ENCODE measurements at regions of chr16 and their contacts with region 1.

Region 1: GRCh38 chr16:85114909-85115567 is 2.8 kb upstream of the CIBAR2 start:
- DNase-seq: peak; percentile 82
- H3K4me3 Mint-ChIP-seq: peak overlapping the region; percentile 62
- H3K27ac Mint-ChIP-seq: peak overlapping the region; percentile 83
- H3K4me1 Mint-ChIP-seq: peaks cover 8% of the 10 kb centered on the region
- H3K27me3 Mint-ChIP-seq: no peaks in the 10 kb centered on the region

Region 2: DNA sequence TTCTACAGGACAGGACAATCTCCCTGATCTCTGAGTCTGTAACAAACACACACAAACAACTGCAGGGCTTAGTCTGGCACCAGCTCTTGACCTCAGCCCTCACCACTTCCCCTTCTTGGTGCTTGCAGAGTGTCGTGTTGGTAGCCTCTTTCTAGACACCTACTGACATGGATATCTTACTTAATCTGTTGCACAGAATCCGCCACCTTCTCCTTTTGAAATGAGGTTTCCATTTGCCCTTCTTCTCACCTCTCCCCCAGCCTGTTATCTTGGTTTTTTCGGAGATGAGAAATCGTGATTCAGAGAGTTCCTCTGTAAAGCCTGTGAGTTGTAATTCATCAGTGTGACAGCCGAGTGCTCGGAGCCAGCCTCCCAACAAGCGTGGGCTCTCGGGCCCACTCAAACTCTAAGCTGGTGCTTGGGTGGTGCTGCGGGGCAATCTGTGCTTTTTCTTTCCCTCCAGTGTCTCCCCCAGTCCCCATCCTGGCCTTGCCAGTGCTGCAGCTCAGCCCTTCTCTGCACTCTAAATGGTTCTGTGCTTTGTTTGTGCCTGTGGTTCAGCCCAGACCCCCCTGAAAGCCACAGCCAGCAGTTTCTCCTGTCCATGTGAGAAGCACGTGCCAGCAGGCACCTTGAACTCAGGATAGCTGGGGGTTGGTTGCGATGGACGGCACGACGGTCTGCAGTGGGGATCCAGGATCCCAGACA is 59.4 kb before region 1 on chr16:
- CTCF ChIA-PET with region 1: no interaction called
- POLR2A ChIA-PET with region 1: no interaction called
- DNase-seq: peak; percentile 94
- H3K4me3 Mint-ChIP-seq: peak overlapping the region; percentile 72
- H3K27ac Mint-ChIP-seq: peak overlapping the region; percentile 99
- H3K4me1 Mint-ChIP-seq: peaks cover 56% of the 10 kb centered on the region
- H3K27me3 Mint-ChIP-seq: no peaks in the 10 kb centered on the region

Region 3: DNA sequence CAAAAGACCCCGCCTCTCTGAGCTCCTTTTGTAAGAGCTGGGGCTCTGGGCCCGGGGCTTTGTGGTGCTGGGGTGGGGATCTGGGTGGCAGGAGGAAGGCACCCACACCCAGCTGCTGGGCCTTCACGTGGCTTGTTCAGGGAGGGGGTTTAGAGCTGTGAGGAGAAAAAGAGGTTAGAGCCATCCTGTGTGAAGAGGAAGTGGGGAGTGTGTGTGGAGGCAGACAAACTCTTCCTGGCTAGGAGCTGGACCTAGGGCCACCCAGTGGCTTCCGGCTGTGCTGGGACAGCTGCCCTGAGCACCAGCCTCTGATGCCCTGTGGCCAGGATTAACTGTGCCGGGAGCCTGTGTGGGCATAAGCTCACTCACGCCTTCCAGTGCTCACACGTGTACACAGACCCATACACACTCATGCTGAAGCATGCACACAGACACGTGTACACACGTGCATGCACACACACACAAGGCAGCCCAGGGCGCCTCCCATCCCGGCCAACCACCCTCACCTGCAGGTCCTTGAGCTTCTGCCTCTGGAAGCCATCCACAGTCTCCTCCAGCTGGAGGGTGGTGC is 10.1 kb before region 1 on chr16:
- CTCF ChIA-PET with region 1: interaction called, 11 read pairs
- POLR2A ChIA-PET with region 1: no interaction called
- DNase-seq: peak; percentile 50
- H3K4me3 Mint-ChIP-seq: peak overlapping the region; percentile 28
- H3K27ac Mint-ChIP-seq: peak overlapping the region; percentile 85
- H3K4me1 Mint-ChIP-seq: peaks cover 40% of the 10 kb centered on the region
- H3K27me3 Mint-ChIP-seq: no peaks in the 10 kb centered on the region

Region 4: DNA sequence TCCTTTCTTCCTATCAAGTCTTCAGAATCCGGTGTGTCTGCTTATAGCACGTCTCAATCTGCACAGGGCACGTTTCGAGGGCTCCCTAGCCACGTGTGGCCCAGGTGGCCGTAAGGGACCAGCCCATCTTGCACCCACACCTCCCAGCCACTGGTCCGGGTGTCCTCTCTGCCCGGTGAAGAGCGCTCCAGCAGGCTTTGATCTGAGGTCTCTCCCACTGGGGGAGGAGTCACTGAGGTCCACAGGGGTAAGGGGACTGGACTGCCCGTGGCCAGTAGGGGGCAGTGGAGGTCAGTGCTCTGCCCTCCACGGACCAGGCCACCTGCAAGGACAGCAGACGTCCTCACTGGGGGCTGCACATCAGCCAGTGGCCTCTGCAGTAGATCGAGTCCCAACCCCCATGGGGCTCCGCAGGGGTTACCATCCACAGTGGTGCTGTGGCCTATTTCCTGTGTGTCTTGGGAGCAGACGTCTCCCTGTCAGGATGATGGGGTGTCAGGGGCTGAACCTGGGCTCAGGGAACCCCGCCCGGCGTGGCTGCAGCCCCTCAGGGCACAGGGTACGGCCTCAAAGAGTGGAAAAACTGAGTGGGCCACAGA is 201.4 kb after region 1 on chr16:
- CTCF ChIA-PET with region 1: no interaction called
- POLR2A ChIA-PET with region 1: no interaction called
- DNase-seq: peak; percentile 50
- H3K4me3 Mint-ChIP-seq: no peak overlapping the region
- H3K27ac Mint-ChIP-seq: no peak overlapping the region
- H3K4me1 Mint-ChIP-seq: peaks cover 8% of the 10 kb centered on the region
- H3K27me3 Mint-ChIP-seq: no peaks in the 10 kb centered on the region

Measured in activated CD4-positive, alpha-beta T cell treated with anti-CD3 and anti-CD28 coated beads, Interleukin-2, amount 10 ng/mL, durations not matched to agents 7 days and 5 days (primary cell).